ENCODE measurements at regions of chr17 and their contacts with region 1.

Region 1: DNA sequence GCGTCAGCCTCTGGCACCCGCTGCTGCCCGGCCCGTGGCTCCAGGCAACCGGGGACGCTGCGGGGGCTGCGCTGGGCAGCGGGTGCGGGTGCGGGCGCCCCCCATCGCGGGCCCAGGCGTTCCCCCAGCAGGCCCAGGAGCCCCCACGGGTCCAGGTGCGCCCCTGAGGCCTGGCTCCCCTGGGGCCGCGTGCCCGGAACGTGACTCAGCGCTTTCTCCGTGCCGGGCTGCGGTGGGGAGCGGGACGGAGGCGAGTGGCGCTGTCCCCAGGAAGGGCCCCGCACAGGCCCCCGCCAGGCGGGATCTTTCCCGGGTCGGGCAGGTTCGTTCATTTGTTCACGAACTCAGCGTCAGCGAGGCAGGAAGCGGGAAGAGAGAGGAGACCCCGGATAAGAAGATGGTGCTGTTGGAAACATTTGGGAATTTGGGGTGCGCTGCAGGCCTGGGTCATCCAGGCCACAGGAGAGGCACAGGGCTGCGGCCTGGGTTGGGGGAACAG is 18.4 kb upstream of the EXOC7 start:
- DNase-seq: peak; percentile 40
- ATAC-seq: peak; percentile 10
- H3K4me3 Mint-ChIP-seq: peak overlapping the region; percentile 45
- H3K27ac Mint-ChIP-seq: peak overlapping the region; percentile 77
- H3K4me1 Mint-ChIP-seq: peaks cover 20% of the 10 kb centered on the region
- H3K27me3 Mint-ChIP-seq: no peaks in the 10 kb centered on the region
- CTCF ChIP-seq: no peak

Region 2: GRCh38 chr17:76132574-76133338 is 10.8 kb after region 1 on chr17:
- CTCF ChIA-PET with region 1: interaction called, 10 read pairs
- POLR2A ChIA-PET with region 1: interaction called, 4 read pairs
- intact Hi-C with region 1: no loop called
- DNase-seq: no peak
- ATAC-seq: no peak
- H3K4me3 Mint-ChIP-seq: no peak overlapping the region
- H3K27ac Mint-ChIP-seq: no peak overlapping the region
- H3K4me1 Mint-ChIP-seq: peaks cover 18% of the 10 kb centered on the region
- H3K27me3 Mint-ChIP-seq: no peaks in the 10 kb centered on the region
- CTCF ChIP-seq: no peak

Region 3: GRCh38 chr17:76296186-76296585 is 174.2 kb after region 1 on chr17:
- CTCF ChIA-PET with region 1: interaction called, 13 read pairs
- POLR2A ChIA-PET with region 1: no interaction called
- intact Hi-C with region 1: no loop called
- DNase-seq: no peak
- ATAC-seq: no peak
- H3K4me3 Mint-ChIP-seq: no peak overlapping the region
- H3K27ac Mint-ChIP-seq: no peak overlapping the region
- H3K4me1 Mint-ChIP-seq: no peaks in the 10 kb centered on the region
- H3K27me3 Mint-ChIP-seq: no peaks in the 10 kb centered on the region
- CTCF ChIP-seq: no peak